ENCODE measurements at regions of chr4 and their contacts with region 1.

Region 1: GRCh38 chr4:39527273-39528060 is at the start of gene UGDH:
- DNase-seq: peak; percentile 95
- H3K4me3 ChIP-seq: peak within 1 kb of the TSS; percentile 80
- H3K27ac ChIP-seq: no peak within 1 kb of the TSS
- H3K4me1 ChIP-seq: peaks cover 16% of the 10 kb centered on the region
- CTCF ChIP-seq: no peak; the same call in 1 of the 2 replicates
- total RNA-seq, gene UGDH: 8.1 and 9.8 TPM in 2 replicates

Region 2: GRCh38 chr4:39638354-39639240 is 111.1 kb after region 1 on chr4 and contains the start of gene SMIM14:
- CTCF ChIA-PET with region 1: no interaction called
- POLR2A ChIA-PET with region 1: interaction called, 3 read pairs
- intact Hi-C with region 1: loop called (anchors 5 kb)
- DNase-seq: peak; percentile 41
- H3K4me3 ChIP-seq: peak within 1 kb of the TSS; percentile 68
- H3K27ac ChIP-seq: no peak within 1 kb of the TSS
- H3K4me1 ChIP-seq: peaks cover 22% of the 10 kb centered on the region
- CTCF ChIP-seq: no peak
- total RNA-seq, gene SMIM14: 0.03 TPM in 1 of 2 replicates, not detected in the other

Region 3: DNA sequence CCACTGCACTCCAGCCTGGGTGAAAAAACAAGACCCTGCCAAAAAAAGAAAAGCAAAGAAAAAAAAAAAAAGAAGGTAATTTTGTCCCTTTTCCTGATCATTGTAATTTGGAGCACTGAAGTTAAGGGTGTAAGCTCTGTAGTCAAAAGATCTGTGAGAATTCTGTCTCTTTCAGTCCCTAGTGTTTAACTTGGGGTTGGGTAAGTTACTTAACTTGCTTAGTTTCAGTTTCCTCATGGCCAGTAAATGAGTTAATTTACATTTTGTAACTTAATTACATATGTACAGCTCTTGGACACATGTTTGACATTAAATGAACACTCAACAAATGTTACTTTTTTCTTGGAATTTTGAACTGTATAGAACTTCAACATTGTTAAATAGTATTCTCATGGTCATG is 159.5 kb after region 1 on chr4:
- CTCF ChIA-PET with region 1: no interaction called
- POLR2A ChIA-PET with region 1: no interaction called
- intact Hi-C with region 1: no loop called
- DNase-seq: no peak
- H3K4me3 ChIP-seq: no peak overlapping the region
- H3K27ac ChIP-seq: no peak overlapping the region
- H3K4me1 ChIP-seq: peaks cover 12% of the 10 kb centered on the region
- CTCF ChIP-seq: no peak

Measured in OCI-LY7 (cell line).